ENCODE measurements at regions of chr2 and their contacts with region 1.

Region 1: DNA sequence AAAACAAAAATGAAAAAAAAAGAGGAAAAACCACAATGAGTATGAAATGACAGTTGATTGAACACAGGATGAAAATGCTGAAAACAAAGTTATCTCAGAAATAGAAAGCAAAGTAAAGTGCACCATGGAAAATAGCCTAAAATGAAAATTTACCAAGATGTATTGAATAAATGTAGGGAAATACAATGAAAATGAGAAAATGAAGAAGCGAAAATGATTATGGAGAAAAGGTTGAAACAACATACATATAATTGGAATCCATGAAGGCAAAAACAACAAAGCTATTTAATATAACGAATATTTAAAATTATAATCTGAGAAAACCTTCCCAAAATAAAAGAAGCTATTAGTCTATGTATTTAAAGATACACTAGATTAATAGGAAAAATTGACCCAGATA is 147.4 kb downstream of the TMEM18 start:
- DNase-seq: no peak
- H3K4me3 Mint-ChIP-seq: no peak overlapping the region
- H3K27ac Mint-ChIP-seq: no peak overlapping the region
- H3K4me1 Mint-ChIP-seq: no peaks in the 10 kb centered on the region
- H3K27me3 Mint-ChIP-seq: peaks cover 7% of the 10 kb centered on the region

Region 2: DNA sequence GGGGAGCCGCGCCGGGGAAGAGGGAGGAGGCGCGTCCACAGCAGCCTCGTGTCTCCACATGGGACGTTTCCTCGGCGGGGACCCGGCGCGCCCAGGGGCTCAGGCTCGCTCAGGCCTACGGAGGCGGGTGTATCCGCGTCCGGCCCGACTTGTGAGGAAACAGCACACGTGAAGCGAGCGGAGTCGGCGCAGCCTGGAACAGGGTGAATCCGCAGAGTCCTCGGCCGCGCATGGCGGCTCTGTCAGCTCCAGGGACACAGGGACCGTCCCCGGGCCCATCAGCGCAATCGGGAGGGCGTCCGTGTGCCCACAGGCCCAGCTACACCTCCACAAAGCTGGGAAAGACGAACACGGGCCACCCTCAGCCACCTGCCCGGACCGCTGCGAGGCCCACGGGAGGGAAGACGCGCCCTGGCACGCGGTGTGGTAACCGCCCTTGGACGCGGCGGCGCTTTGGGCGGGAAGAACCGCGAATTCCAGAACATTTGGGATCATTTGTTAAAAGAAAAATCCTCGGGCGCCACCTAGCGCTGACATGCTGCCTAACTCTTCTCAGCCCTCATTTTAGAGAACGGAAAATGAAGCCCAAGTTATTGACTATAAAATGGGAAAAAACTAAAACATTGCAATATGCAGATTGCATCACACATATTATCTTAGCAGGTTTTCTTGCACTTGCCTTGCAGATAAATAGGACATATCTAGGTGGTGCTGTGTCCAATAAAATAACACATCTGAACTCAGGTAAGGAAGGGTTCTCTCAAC is 107.0 kb after region 1 on chr2:
- intact Hi-C with region 1: loop called (anchors 5 kb)
- DNase-seq: peak; percentile 83
- H3K4me3 Mint-ChIP-seq: peak overlapping the region; percentile 81
- H3K27ac Mint-ChIP-seq: peak overlapping the region; percentile 76
- H3K4me1 Mint-ChIP-seq: peaks cover 2% of the 10 kb centered on the region
- H3K27me3 Mint-ChIP-seq: peaks cover 13% of the 10 kb centered on the region